ENCODE measurements at regions of chr12 and their contacts with region 1.

Region 1: GRCh38 chr12:49623142-49623904 is at the start of gene PRPF40B:
- DNase-seq: peak; percentile 85
- H3K4me3 Mint-ChIP-seq: peak within 1 kb of the TSS; percentile 79
- H3K27ac Mint-ChIP-seq: peak within 1 kb of the TSS; percentile 76
- H3K4me1 Mint-ChIP-seq: peaks cover 20% of the 10 kb centered on the region
- H3K27me3 Mint-ChIP-seq: peaks cover 12% of the 10 kb centered on the region
- total RNA-seq, gene PRPF40B: 7.2 to 7.7 TPM

Region 2: DNA sequence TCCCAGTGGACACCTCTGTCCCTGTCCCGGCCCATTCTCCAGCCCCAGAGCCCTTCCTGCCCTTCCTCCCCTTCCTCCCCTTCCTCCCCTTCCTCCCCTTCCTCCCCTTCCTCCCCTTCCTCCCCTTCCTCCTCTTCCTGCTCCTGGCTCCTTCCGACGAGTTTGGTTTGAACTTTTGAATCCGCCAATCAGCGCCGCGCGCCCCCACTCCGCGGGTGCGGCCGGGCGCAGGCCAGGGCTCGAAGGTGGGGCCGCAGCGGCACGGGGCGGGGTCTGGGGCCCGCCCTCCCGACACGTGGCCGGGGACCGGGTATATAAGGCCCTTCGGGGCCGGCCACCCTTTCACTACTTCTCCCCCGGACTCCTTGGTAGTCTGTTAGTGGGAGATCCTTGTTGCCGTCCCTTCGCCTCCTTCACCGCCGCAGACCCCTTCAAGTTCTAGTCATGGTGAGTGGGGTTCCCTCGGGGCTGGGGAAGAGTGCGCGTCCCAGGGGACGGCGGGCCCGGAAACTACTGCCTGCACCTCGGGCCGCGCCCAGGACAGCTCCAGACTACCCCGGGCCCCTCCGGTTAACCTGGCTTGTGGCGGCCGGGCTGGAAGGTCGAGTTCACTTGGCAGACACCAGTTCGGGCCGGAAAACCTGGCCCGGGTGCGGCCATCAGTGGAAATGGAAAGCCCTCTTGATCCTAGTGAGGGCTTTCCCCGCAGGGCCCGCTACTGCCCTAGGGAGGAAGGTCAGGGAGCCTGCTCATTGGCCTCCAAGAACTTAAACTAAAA is 358.4 kb before region 1 on chr12 and contains the start of gene TUBA1C:
- CTCF ChIA-PET with region 1: no interaction called
- intact Hi-C with region 1: loop called (anchors 2 kb)
- DNase-seq: peak; percentile 91
- H3K4me3 Mint-ChIP-seq: peak within 1 kb of the TSS; percentile 97
- H3K27ac Mint-ChIP-seq: peak within 1 kb of the TSS; percentile 96
- H3K4me1 Mint-ChIP-seq: peaks cover 50% of the 10 kb centered on the region
- H3K27me3 Mint-ChIP-seq: peaks cover 2% of the 10 kb centered on the region
- total RNA-seq, gene TUBA1C: 214 to 227 TPM

Region 3: GRCh38 chr12:49366652-49367380 is 256.5 kb before region 1 on chr12:
- CTCF ChIA-PET with region 1: no interaction called
- intact Hi-C with region 1: loop called (anchors 2 kb)
- DNase-seq: peak; percentile 90
- H3K4me3 Mint-ChIP-seq: peak overlapping the region; percentile 95
- H3K27ac Mint-ChIP-seq: peak overlapping the region; percentile 95
- H3K4me1 Mint-ChIP-seq: peaks cover 23% of the 10 kb centered on the region
- H3K27me3 Mint-ChIP-seq: no peaks in the 10 kb centered on the region

Region 4: DNA sequence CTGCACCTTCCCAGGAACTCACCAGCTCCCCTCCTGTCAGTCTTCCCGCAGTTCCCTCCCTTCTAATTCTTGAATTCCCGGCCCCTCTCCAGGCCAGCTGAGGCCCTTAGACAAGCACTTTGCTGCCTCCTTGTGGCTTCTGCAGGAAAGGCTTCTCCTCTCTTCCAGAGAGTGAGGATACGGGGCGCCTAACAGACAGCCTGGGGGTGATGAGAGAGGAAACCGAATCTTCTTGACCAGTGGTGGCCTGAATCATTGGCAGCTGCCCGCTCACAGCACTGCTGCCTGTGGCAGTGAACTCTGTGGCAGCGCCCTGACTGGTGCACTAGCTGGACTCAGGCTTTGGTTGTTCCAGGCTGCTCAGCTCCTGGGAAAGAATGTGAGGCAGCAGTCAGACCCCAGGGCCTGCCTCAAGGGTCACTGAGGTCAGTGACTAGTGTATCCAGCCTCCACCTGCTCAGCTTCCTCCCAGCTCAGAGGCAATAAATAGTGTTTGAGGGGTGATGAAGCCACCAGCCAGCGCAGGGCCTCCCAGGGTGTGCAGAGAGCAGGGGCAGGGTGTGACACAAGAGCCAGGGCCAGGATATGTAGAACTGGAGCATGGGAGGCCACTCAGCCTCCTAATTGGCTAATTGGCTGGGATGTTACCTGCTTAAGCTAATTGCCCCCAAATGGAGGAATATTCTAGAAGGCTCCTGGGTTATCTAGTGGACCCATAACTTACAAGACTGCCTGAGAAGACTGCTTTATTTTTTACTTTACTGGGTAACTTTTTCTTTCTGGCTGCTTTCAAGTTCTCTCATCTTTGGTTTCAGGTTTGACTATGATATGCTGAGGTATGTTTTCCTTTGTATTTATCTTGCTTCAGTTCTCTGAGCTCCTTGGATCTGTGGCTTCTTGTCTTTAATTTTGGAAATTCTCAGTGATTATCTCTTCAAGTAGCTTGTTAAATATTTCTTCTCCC is 42.5 kb before region 1 on chr12:
- CTCF ChIA-PET with region 1: interaction called, 6 read pairs
- intact Hi-C with region 1: loop called (anchors 5 kb)
- DNase-seq: peak; percentile 69
- H3K4me3 Mint-ChIP-seq: no peak overlapping the region
- H3K27ac Mint-ChIP-seq: no peak overlapping the region
- H3K4me1 Mint-ChIP-seq: peaks cover 16% of the 10 kb centered on the region
- H3K27me3 Mint-ChIP-seq: no peaks in the 10 kb centered on the region

Region 5: DNA sequence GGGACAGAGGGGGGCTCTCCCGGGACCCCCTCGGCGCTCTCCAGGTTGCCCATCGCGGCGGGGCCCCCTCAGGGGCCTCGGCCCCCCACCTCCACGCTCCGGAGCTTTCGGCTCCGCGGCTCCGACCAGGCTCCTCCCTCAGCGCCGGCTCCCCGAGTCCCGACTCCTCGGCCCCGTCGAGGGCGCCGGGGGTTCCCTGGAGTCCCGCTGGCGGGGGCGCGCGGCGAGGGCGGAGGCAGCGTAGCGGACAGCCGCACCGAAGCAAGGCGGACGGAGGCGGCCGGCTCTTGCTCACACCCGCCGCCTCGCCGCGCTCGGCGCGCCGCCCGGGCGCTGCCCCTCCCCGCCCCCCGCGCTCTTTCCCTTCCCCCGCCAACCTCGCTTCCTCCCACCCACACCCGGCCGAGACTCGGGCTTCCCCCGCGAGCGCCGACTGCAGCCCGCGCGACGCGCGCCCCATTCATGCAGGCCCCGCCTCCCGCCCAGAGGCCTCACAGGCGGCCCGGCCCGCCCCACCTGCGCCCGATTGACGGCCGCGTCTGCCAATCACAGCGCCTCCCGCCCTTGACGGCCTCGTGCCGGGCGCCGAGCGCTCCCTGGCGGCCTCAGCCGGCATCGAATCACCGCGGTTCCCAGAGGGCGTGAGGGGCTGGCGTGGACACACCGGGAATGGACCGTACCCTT is 83.9 kb after region 1 on chr12 and contains the start of gene FMNL3:
- CTCF ChIA-PET with region 1: interaction called, 12 read pairs
- intact Hi-C with region 1: loop called (anchors 1 kb)
- DNase-seq: peak; percentile 98
- H3K4me3 Mint-ChIP-seq: peak within 1 kb of the TSS; percentile 89
- H3K27ac Mint-ChIP-seq: peak within 1 kb of the TSS; percentile 85
- H3K4me1 Mint-ChIP-seq: peaks cover 45% of the 10 kb centered on the region
- H3K27me3 Mint-ChIP-seq: peaks cover 2% of the 10 kb centered on the region
- total RNA-seq, gene FMNL3: 20.0 to 20.7 TPM

Region 6: DNA sequence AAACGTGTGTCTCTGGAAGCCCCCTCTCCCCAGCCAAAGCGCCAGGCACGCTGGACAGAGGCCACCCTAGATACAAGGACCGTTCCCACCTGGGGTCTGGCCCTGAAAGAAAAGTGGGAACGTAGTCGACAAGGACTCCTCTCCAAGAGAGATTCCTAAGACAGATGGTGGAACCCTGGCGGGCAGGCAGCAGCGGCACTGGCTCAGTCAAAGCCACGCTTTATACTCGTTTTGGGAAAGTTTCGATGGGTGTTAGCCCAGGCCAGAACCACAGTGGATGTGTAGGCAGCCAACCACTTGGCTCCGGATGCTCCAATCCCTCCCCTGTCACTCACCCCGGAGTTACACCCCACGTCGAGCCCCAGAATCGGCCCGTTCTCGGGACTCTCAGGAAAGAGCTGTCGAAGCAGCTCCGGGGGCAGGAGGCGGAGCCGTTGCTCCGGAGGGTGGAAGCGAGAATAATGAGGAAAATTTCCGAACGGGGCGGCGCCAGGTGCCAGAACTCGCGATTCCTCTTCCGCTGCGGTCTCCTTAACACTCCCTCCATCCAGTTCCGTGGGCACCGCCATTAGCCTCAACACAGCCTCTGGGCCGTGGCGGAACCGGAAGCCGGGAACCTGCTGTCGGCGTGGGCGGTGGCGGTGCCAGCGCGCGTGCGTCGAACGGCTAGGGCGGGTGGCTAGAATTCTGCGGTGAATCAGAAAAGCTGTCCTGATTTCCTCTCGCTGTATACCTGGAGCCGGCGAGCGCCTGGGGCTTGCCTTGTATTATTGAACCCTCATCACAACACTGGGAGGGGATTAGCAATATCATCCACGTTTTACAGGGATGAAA is 219.4 kb after region 1 on chr12 and contains the start of gene BCDIN3D:
- CTCF ChIA-PET with region 1: no interaction called
- intact Hi-C with region 1: loop called (anchors 1 kb)
- DNase-seq: peak; percentile 97
- H3K4me3 Mint-ChIP-seq: peak within 1 kb of the TSS; percentile 91
- H3K27ac Mint-ChIP-seq: peak within 1 kb of the TSS; percentile 93
- H3K4me1 Mint-ChIP-seq: peaks cover 34% of the 10 kb centered on the region
- H3K27me3 Mint-ChIP-seq: no peaks in the 10 kb centered on the region
- total RNA-seq, gene BCDIN3D: 2.4 to 4.1 TPM

Region 7: GRCh38 chr12:51549637-51550036 is 1926.3 kb after region 1 on chr12:
- CTCF ChIA-PET with region 1: no interaction called
- intact Hi-C with region 1: no loop called
- DNase-seq: no peak
- H3K4me3 Mint-ChIP-seq: no peak overlapping the region
- H3K27ac Mint-ChIP-seq: no peak overlapping the region
- H3K4me1 Mint-ChIP-seq: no peaks in the 10 kb centered on the region
- H3K27me3 Mint-ChIP-seq: peaks cover 20% of the 10 kb centered on the region